A549 (cell line): ENCODE measurements at regions of chr19 and their contacts with region 1.

Region 1: GRCh38 chr19:14347999-14348889 is 33.0 kb upstream of the ADGRE5 start:
- DNase-seq: peak; percentile 50 to 76
- ATAC-seq: peak; percentile 90
- H3K4me3 ChIP-seq: peak overlapping the region; percentile 31; the same call in 2 of the 3 replicates
- H3K27ac ChIP-seq: peak overlapping the region; percentile 73
- H3K4me1 ChIP-seq: 0 out of 3 replicates have a peak, but pooled peaks cover 1% of the 10 kb centered on the region
- CTCF ChIP-seq: peak; percentile 93
- EP300 ChIP-seq: no peak
- POLR2A ChIP-seq: no peak
- RAD21 ChIP-seq: peak; percentile 92 to 93

Region 2: GRCh38 chr19:14183741-14184350 is 164.4 kb before region 1 on chr19:
- CTCF ChIA-PET with region 1: interaction called, 202 read pairs
- POLR2A ChIA-PET with region 1: no interaction called
- DNase-seq: no peak
- ATAC-seq: no peak; a peak in 1 of 6 replicates
- H3K4me3 ChIP-seq: no peak overlapping the region
- H3K27ac ChIP-seq: no peak overlapping the region
- H3K4me1 ChIP-seq: no peaks in the 10 kb centered on the region
- CTCF ChIP-seq: no peak
- EP300 ChIP-seq: no peak
- POLR2A ChIP-seq: no peak
- RAD21 ChIP-seq: no peak

Region 3: GRCh38 chr19:14218620-14219330 is 129.5 kb before region 1 on chr19:
- CTCF ChIA-PET with region 1: interaction called, 17 read pairs
- POLR2A ChIA-PET with region 1: no interaction called
- DNase-seq: no peak
- ATAC-seq: no peak
- H3K4me3 ChIP-seq: no peak overlapping the region
- H3K27ac ChIP-seq: peak overlapping the region; percentile 67 to 80; a peak in 5 of 6 replicates
- H3K4me1 ChIP-seq: peaks cover 17% of the 10 kb centered on the region; the same call in 2 of the 3 replicates
- CTCF ChIP-seq: no peak
- EP300 ChIP-seq: no peak
- POLR2A ChIP-seq: no peak
- RAD21 ChIP-seq: no peak

Region 4: DNA sequence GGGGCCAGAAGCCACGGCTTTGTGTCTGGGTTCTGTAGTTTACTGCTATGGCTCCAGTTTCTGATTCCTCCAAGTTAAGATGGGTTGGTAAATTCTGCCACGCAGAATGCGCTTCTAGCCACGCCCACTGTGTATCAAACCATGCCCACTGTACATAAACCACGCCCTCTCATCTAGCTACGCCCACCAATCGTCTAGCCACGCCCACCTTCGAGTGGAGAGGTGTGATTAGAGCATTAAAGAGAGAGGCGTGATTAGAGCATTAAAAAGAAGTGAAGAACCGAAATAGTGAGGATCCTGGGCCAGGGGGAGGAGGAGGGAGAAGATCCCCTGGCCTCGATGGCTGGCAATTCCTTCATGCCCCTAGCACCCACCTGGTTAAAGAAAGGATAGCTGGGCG is 10.7 kb before region 1 on chr19:
- CTCF ChIA-PET with region 1: interaction called, 24 read pairs
- POLR2A ChIA-PET with region 1: interaction called, 7 read pairs
- DNase-seq: peak; percentile 34 to 75
- ATAC-seq: peak; percentile 54 to 64; a peak in 5 of 6 replicates
- H3K4me3 ChIP-seq: no peak overlapping the region
- H3K27ac ChIP-seq: no peak overlapping the region
- H3K4me1 ChIP-seq: no peaks in the 10 kb centered on the region
- CTCF ChIP-seq: no peak
- EP300 ChIP-seq: no peak
- POLR2A ChIP-seq: no peak
- RAD21 ChIP-seq: no peak

Region 5: DNA sequence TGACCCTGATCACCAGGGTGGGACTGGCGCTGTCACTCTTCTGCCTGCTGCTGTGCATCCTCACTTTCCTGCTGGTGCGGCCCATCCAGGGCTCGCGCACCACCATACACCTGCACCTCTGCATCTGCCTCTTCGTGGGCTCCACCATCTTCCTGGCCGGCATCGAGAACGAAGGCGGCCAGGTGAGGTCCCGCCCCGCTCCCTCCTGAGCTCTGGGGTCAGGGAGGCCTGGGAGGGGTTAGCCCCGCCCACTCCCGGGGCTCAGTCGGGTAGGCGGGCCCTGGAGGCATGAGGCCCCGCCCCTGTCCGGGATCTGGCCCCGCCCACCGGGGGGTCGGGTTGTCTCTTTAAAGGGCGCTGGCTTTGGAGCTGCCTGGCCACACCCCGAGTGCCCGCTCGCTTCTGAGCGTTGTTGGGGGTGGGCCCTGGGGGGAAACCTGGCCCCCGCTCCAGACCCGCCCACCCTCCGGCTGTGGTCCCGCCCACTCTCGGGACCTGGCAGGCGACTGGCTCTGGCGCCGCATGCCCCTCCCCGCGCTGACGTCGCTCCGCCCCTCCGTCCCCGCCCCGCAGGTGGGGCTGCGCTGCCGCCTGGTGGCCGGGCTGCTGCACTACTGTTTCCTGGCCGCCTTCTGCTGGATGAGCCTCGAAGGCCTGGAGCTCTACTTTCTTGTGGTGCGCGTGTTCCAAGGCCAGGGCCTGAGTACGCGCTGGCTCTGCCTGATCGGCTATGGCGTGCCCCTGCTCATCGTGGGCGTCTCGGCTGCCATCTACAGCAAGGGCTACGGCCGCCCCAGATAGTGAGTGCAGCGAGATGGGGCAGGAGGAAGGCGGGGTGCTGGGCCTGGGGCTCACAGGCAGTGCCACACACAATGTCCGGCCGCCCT is 57.8 kb after region 1 on chr19:
- CTCF ChIA-PET with region 1: interaction called, 12 read pairs
- POLR2A ChIA-PET with region 1: no interaction called
- DNase-seq: peak; percentile 71 to 88
- ATAC-seq: peak; percentile 47 to 75
- H3K4me3 ChIP-seq: no peak overlapping the region
- H3K27ac ChIP-seq: peak overlapping the region in 1 of 2 experiments; percentile 56; a peak in 1 of 6 replicates
- H3K4me1 ChIP-seq: no peaks in the 10 kb centered on the region
- CTCF ChIP-seq: peak; percentile 60
- EP300 ChIP-seq: no peak
- POLR2A ChIP-seq: no peak
- RAD21 ChIP-seq: peak; percentile 64 to 70